ENCODE measurements at regions of chr15 and their contacts with region 1.

Region 1: GRCh38 chr15:45037936-45038335 is 14.9 kb downstream of the SORD start:
- DNase-seq: no peak
- ATAC-seq: no peak
- H3K4me3 ChIP-seq: no peak overlapping the region
- H3K4me3 Mint-ChIP-seq: no peak overlapping the region
- H3K27ac ChIP-seq: no peak overlapping the region
- H3K27ac Mint-ChIP-seq: no peak overlapping the region
- H3K4me1 ChIP-seq: peaks cover 2% of the 10 kb centered on the region
- H3K4me1 Mint-ChIP-seq: peaks cover 8 to 17% of the 10 kb centered on the region in 2 donors
- H3K27me3 ChIP-seq: no peaks in the 10 kb centered on the region
- H3K27me3 Mint-ChIP-seq: peaks cover 0 to 5% of the 10 kb centered on the region in 2 donors
- CTCF ChIP-seq: no peak

Region 2: DNA sequence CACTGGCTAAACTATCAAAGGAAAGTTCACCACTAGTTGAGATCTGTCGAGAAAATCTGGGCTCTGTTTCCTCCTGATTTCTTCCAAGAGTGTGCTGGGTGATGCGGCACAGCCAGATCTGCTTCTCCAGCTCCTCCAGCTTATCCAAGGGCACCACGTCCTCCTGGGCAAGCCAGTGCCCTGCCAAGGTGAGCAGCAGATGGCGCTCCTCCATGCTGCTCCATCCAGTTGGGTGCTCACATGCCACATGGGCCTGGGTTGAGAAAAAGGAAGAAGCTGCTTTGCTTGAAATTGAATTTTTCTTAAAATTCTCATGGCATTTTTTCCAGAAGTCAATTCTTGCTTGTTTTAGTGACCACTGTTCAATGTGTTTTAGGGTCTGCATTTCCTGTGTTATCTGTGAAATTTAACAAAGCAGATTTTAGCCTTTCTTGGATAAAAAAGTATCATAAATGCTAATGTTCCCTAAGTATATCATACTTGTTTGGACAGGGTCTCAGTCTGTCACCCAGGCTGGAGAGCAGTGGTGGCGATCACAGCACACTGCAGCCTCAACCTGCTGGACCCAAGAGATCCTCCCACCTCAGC is 453.7 kb before region 1 on chr15:
- intact Hi-C with region 1: loop called (anchors 2 kb)
- DNase-seq: peak; percentile 24 to 75
- ATAC-seq: peak; percentile 70 to 74 (median 72)
- H3K4me3 ChIP-seq: no peak overlapping the region
- H3K4me3 Mint-ChIP-seq: no peak overlapping the region
- H3K27ac ChIP-seq: no peak overlapping the region
- H3K27ac Mint-ChIP-seq: peak overlapping the region; percentile 9 to 12
- H3K4me1 ChIP-seq: peaks cover 1% of the 10 kb centered on the region
- H3K4me1 Mint-ChIP-seq: peaks cover 5 to 8% of the 10 kb centered on the region in 2 donors
- H3K27me3 ChIP-seq: no peaks in the 10 kb centered on the region
- H3K27me3 Mint-ChIP-seq: no peaks in the 10 kb centered on the region
- CTCF ChIP-seq: peak; percentile 22

Region 3: GRCh38 chr15:44593042-44593736 is 444.7 kb before region 1 on chr15:
- intact Hi-C with region 1: loop called (anchors 5 kb)
- DNase-seq: peak in 1 of 2 donors; percentile 73
- ATAC-seq: peak; percentile 62 to 78 (median 71)
- H3K4me3 ChIP-seq: no peak overlapping the region
- H3K4me3 Mint-ChIP-seq: no peak overlapping the region
- H3K27ac ChIP-seq: no peak overlapping the region
- H3K27ac Mint-ChIP-seq: no peak overlapping the region
- H3K4me1 ChIP-seq: no peaks in the 10 kb centered on the region
- H3K4me1 Mint-ChIP-seq: no peaks in the 10 kb centered on the region
- H3K27me3 ChIP-seq: no peaks in the 10 kb centered on the region
- H3K27me3 Mint-ChIP-seq: no peaks in the 10 kb centered on the region
- CTCF ChIP-seq: peak; percentile 61

Region 4: DNA sequence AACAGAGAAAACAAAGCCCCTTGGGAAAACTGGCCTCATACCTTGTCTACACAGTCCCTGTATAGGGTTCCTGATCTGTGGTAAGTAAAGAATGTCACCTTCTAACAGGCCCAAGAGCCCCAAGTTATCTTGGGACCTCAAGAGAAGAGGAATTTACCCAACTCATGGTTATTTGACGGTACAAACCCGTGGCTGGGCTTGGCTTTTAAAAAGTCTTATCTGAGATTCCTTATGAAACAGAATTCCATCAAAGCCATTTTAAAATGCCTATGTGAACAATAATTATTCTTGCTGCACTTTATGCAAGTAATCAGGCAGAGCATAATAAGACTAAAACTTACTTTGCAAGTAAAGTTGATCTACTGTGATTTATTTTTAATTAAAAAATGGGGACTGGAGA is 28.9 kb before region 1 on chr15:
- intact Hi-C with region 1: no loop called
- DNase-seq: no peak
- ATAC-seq: no peak
- H3K4me3 ChIP-seq: no peak overlapping the region
- H3K4me3 Mint-ChIP-seq: no peak overlapping the region
- H3K27ac ChIP-seq: no peak overlapping the region
- H3K27ac Mint-ChIP-seq: no peak overlapping the region
- H3K4me1 ChIP-seq: no peaks in the 10 kb centered on the region
- H3K4me1 Mint-ChIP-seq: no peaks in the 10 kb centered on the region
- H3K27me3 ChIP-seq: no peaks in the 10 kb centered on the region
- H3K27me3 Mint-ChIP-seq: peaks cover 10 to 42% of the 10 kb centered on the region in 2 donors
- CTCF ChIP-seq: no peak

Region 5: DNA sequence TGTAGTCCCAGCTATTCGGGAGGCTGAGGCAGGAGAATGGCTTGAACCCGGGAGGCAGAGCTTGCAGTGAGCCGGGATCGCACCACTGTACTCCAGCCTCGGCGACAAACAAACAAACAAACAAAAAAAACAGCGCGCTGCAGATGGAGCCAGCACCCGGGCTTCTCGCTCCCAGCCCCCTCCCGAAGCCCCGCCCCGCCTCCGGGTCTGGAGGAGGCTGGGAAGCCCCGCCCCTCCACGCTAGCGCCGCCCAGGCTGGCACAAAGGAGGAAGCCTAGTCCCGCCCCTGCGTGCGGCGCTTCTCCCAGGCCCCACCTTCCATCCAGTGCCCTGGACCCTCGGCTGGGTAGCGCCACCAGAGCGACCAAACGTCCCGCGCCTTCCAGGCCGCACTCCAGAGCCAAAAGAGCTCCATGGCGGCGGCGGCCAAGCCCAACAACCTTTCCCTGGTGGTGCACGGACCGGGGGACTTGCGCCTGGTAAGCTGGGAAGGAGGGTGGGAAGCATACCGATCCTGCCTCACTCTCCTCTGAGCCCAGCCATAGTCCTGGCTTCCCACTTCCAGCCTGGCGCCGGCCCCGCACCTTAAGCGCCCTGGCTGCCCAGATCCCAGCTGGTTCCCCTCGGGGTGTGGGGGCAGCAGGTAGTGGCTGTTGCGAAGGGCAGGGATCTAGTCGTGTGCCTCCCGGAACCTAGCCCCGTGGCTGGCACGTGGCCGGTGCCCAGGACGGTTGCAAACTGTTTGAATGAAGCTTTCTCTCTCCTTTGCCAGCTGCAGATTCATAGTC is 14.9 kb before region 1 on chr15 and contains the start of gene SORD:
- intact Hi-C with region 1: no loop called
- DNase-seq: peak; percentile 82 to 92
- ATAC-seq: peak; percentile 98 to 99 (median 99)
- H3K4me3 ChIP-seq: peak within 1 kb of the TSS; percentile 72
- H3K4me3 Mint-ChIP-seq: peak within 1 kb of the TSS; percentile 89
- H3K27ac ChIP-seq: no peak within 1 kb of the TSS
- H3K27ac Mint-ChIP-seq: peak within 1 kb of the TSS; percentile 51 to 78
- H3K4me1 ChIP-seq: peaks cover 19% of the 10 kb centered on the region
- H3K4me1 Mint-ChIP-seq: peaks cover 8 to 12% of the 10 kb centered on the region in 2 donors
- H3K27me3 ChIP-seq: no peaks in the 10 kb centered on the region
- H3K27me3 Mint-ChIP-seq: peaks cover 13 to 20% of the 10 kb centered on the region in 2 donors
- CTCF ChIP-seq: no peak
- total RNA-seq, gene SORD: 2.6 to 5.7 (median 2.8) TPM